Heart right ventricle (tissue), 16 donors: ENCODE measurements at regions of chr15 and their contacts with region 1.

Region 1: DNA sequence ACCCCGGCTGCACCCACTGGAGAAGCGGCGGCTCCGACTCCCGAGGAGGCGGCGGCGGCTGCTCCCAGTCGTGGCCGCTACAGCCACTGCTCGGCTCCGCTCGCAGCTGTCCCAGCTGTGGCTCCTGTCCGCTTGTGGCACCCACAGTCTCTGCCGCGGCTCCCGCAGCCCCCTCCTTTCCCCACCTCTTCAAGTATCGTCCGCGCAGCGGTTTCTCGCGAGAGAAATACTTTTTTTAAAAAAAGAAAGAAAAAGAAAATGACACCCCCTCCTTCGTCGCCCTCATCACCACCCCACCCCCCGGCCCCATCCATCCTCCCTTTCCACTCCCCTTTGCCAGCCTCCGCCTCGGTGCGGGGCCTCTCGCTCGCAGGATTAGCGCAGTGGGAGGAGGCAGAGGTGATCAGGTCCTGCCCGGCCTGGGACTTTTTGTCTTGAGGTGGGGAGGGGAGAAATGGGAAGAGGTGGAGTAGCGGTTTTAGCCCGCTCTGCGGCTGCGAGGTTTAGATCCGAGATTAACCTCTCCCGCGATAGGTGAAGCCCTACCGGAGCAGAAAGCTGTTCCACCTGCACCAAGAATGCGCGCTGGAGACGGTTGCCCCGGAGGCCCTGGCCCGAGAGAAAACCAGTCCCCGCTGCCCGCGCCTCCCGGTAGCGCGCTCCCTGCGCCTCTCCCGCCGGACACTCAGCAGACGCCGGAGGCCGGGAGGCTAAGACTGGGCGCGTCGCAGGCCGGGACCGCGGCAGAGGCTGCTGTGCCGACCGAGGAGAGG is at the start of gene FBN1:
- DNase-seq: peak; percentile 67 to 80
- ATAC-seq: peak; percentile 83 to 93 (median 88)
- H3K4me3 ChIP-seq: peak within 1 kb of the TSS; percentile 64 to 96 (median 89)
- H3K27ac ChIP-seq: peak within 1 kb of the TSS; percentile 85 to 93 (median 90)
- H3K4me1 ChIP-seq: peaks cover 0 to 42% (median 15%) of the 10 kb centered on the region in 9 donors
- H3K27me3 ChIP-seq: peaks cover 0 to 30% (median 6%) of the 10 kb centered on the region in 7 donors
- CTCF ChIP-seq: no peak
- total RNA-seq, gene FBN1: 18.4 to 116 (median 32.9) TPM

Region 2: GRCh38 chr15:48352474-48353072 is 293.2 kb before region 1 on chr15:
- intact Hi-C with region 1: loop called in 3 of 10 experiments (anchors 5 to 10 kb)
- DNase-seq: peak in 1 of 2 donors; percentile 29
- ATAC-seq: peak in 7 of 8 donors; percentile 55 to 81 (median 76)
- H3K4me3 ChIP-seq: no peak overlapping the region
- H3K27ac ChIP-seq: no peak overlapping the region
- H3K4me1 ChIP-seq: peaks cover 0 to 9% (median 0%) of the 10 kb centered on the region in 9 donors
- H3K27me3 ChIP-seq: no peaks in the 10 kb centered on the region
- CTCF ChIP-seq: peak; percentile 52 to 89 (median 79)

Region 3: GRCh38 chr15:48472753-48473152 is 173.0 kb before region 1 on chr15:
- intact Hi-C with region 1: loop called in 1 of 10 experiments (anchors 10 kb)
- DNase-seq: no peak
- ATAC-seq: no peak
- H3K4me3 ChIP-seq: no peak overlapping the region
- H3K27ac ChIP-seq: no peak overlapping the region
- H3K4me1 ChIP-seq: peaks cover 0 to 9% (median 0%) of the 10 kb centered on the region in 9 donors
- H3K27me3 ChIP-seq: no peaks in the 10 kb centered on the region
- CTCF ChIP-seq: no peak

Region 4: DNA sequence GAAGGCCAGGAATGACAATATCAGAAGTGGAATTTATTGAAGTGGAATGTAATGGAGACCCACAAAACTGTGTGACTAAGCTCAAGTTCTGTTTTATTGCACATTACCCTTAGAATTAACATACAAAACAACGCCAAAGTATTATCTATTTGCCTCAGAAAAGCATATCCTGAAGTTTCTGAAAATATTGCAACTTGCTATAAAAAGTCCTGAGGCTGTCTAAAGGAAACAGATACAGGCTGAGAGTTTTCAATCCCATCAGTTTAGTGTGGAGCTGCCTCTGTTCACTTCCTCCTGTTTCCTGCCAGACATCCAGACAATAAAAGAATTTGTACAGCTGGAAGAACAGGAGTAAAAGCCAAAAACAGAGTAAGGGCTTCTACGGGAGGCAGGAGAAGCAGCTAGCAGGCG is 109.1 kb before region 1 on chr15:
- intact Hi-C with region 1: loop called in 3 of 10 experiments (anchors 10 kb)
- DNase-seq: peak in 1 of 2 donors; percentile 14
- ATAC-seq: peak; percentile 59 to 91 (median 86)
- H3K4me3 ChIP-seq: no peak overlapping the region
- H3K27ac ChIP-seq: peak overlapping the region in 8 of 10 donors; percentile 12 to 80 (median 58)
- H3K4me1 ChIP-seq: peaks cover 0 to 69% (median 33%) of the 10 kb centered on the region in 9 donors
- H3K27me3 ChIP-seq: no peaks in the 10 kb centered on the region
- CTCF ChIP-seq: no peak

Region 5: GRCh38 chr15:48602358-48603122 is 43.2 kb before region 1 on chr15:
- intact Hi-C with region 1: loop called in 1 of 10 experiments (anchors 5 kb)
- DNase-seq: peak in 1 of 2 donors; percentile 35
- ATAC-seq: peak in 7 of 8 donors; percentile 72 to 92 (median 81)
- H3K4me3 ChIP-seq: peak overlapping the region in 6 of 10 donors; percentile 14 to 40 (median 19)
- H3K27ac ChIP-seq: peak overlapping the region; percentile 27 to 84 (median 72)
- H3K4me1 ChIP-seq: peaks cover 4 to 44% (median 33%) of the 10 kb centered on the region in 9 donors
- H3K27me3 ChIP-seq: no peaks in the 10 kb centered on the region
- CTCF ChIP-seq: no peak

Region 6: GRCh38 chr15:48703544-48703943 is 57.8 kb after region 1 on chr15:
- intact Hi-C with region 1: no loop called
- DNase-seq: no peak
- ATAC-seq: no peak
- H3K4me3 ChIP-seq: no peak overlapping the region
- H3K27ac ChIP-seq: no peak overlapping the region
- H3K4me1 ChIP-seq: no peaks in the 10 kb centered on the region
- H3K27me3 ChIP-seq: no peaks in the 10 kb centered on the region
- CTCF ChIP-seq: no peak